ENCODE measurements at regions of chr1 and their contacts with region 1.

Region 1: DNA sequence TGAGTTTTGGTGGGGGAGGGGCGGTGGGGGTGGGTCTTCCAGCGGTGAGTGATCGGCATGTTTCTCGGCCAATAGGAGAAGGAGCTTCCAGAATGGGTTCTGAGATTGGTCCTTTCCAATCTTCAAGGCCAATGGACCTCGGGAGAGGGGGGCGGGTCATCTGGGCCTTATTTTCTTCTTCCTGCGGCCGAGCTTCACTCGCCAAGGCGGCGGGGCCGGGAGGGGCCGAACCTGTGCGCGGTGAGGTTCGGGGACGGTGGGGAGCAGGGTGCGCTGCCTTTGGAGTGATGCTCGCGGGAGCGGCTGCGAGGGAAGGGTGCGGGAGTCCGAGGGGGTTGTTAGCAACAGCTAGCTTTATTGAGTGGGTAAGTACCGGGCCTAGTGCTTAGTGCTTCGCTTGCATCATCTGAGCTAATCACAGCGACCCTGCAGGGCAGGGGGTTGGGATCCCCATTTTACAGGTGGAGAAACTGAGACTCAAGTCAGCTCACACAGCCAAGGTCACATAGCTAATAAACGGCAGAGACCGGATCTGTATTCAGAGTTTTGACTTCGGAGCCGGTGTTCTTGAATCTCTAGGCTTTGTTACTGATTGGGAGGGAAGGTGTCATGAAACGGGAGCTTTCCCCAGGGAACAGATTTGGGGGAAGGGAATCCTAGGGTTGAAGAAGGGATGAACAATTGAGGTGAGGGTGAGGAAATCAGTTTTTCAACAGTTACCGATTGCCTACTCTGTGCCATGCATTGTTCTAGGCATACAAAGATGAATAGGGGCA is 549 bp downstream of the KDM4A start:
- DNase-seq: peak; percentile 89
- H3K4me3 Mint-ChIP-seq: peak overlapping the region; percentile 90
- H3K27ac Mint-ChIP-seq: peak overlapping the region; percentile 97
- H3K4me1 Mint-ChIP-seq: peaks cover 29% of the 10 kb centered on the region
- H3K27me3 Mint-ChIP-seq: peaks cover 1% of the 10 kb centered on the region

Region 2: GRCh38 chr1:43454266-43455011 is 196.1 kb before region 1 on chr1:
- intact Hi-C with region 1: loop called (anchors 5 kb)
- DNase-seq: peak; percentile 71
- H3K4me3 Mint-ChIP-seq: peak overlapping the region; percentile 82
- H3K27ac Mint-ChIP-seq: peak overlapping the region; percentile 84
- H3K4me1 Mint-ChIP-seq: peaks cover 17% of the 10 kb centered on the region
- H3K27me3 Mint-ChIP-seq: peaks cover 26% of the 10 kb centered on the region

Region 3: DNA sequence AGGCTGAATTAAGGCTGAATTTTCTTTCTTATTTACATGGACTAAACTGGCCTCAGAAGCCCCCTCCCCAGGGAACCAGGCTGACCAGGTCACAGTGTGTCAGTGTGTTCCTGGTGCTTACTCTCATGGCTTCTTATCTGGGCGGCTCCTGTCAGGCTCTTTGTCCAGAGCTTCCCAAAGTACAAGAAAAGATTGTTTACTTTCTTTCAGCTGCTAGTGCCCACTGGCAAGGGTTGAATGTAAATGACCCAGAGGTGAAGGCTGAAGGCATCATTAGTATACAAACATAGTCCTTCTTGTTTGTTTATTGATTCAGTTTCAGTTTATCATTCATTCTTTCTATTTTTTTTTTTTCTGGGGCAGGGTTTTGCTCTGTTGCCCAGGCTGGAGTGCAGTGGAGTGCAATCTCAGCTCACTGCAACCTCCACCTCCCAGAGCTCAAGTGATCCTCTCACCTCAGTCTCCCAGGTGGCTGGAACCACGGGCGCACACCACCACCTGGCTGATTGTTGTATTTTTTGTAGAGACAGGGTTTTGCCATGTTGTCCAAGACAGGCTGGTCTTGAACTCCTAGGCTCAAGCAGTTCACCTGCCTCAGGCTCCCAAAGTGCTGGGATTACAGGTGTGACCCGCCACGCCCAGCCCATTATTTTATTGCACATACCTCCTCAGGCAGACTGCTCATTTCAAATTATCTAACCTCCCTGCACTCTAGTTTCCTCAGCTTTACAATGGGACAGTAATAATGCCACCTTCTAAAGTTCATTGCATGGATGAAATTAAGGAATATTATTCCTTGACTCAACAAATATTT is 10.3 kb before region 1 on chr1:
- intact Hi-C with region 1: no loop called
- DNase-seq: no peak
- H3K4me3 Mint-ChIP-seq: no peak overlapping the region
- H3K27ac Mint-ChIP-seq: no peak overlapping the region
- H3K4me1 Mint-ChIP-seq: no peaks in the 10 kb centered on the region
- H3K27me3 Mint-ChIP-seq: peaks cover 16% of the 10 kb centered on the region

Region 4: GRCh38 chr1:43671626-43672330 is 21.3 kb after region 1 on chr1:
- intact Hi-C with region 1: no loop called
- DNase-seq: no peak
- H3K4me3 Mint-ChIP-seq: no peak overlapping the region
- H3K27ac Mint-ChIP-seq: no peak overlapping the region
- H3K4me1 Mint-ChIP-seq: no peaks in the 10 kb centered on the region
- H3K27me3 Mint-ChIP-seq: no peaks in the 10 kb centered on the region

Region 5: DNA sequence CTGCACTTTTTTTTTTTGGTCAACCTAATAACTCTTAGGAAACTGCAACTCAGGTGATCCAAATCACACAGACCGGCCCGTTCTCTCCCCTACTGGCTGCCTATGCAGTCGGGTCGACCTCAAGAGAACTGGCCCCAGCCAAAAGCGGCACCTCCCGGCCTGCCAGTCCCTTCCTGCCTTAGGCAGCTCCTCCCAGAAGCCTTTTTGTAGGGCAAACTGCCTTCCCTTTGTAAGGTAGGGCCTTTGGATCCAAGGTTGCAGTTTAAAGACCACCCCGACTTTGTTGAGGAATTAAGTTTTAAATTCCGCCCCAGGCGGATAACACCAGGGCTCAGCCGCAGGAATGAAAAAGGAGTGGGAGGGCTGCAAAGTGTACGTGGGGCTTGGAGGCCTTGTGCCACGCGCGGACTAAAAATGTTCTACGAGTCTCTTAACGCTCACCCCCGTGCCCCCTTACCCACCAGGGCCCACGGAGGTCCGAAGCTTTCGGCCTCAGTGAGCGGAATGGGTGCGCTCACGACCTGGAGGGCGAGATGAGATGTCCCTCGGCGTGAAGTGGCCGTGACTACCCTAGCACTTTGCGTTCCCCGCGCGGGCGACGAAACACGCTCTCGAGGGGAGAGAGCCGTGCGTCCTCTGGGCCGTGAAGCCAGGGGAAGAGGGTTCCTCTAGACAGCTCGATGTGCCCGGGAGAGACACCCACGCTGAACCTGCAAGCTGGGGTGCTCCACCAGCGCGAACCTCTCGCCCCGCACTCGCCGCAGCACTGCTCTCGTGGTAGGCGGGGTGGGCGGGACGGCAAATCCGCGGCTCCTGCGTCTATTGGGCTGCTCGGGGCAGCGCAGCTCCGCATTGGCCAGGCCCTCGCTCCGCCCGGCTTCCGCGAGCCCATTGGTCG is 56.3 kb after region 1 on chr1:
- intact Hi-C with region 1: loop called (anchors 1 kb)
- DNase-seq: peak; percentile 90
- H3K4me3 Mint-ChIP-seq: peak overlapping the region; percentile 85
- H3K27ac Mint-ChIP-seq: peak overlapping the region; percentile 75
- H3K4me1 Mint-ChIP-seq: peaks cover 44% of the 10 kb centered on the region
- H3K27me3 Mint-ChIP-seq: no peaks in the 10 kb centered on the region